ENCODE measurements at regions of chr10 and their contacts with region 1.

Region 1: GRCh38 chr10:121608469-121609190 is 10.4 kb upstream of the FGFR2 start:
- DNase-seq: peak; percentile 61 to 64
- H3K4me3 ChIP-seq: peak overlapping the region in 1 of 3 donors; percentile 2
- H3K27ac ChIP-seq: no peak overlapping the region
- H3K4me1 ChIP-seq: peaks cover 0 to 6% of the 10 kb centered on the region in 2 donors
- H3K27me3 ChIP-seq: no peaks in the 10 kb centered on the region
- CTCF ChIP-seq: peak; percentile 37 to 97 (median 92)
- POLR2A ChIP-seq: no peak

Region 2: DNA sequence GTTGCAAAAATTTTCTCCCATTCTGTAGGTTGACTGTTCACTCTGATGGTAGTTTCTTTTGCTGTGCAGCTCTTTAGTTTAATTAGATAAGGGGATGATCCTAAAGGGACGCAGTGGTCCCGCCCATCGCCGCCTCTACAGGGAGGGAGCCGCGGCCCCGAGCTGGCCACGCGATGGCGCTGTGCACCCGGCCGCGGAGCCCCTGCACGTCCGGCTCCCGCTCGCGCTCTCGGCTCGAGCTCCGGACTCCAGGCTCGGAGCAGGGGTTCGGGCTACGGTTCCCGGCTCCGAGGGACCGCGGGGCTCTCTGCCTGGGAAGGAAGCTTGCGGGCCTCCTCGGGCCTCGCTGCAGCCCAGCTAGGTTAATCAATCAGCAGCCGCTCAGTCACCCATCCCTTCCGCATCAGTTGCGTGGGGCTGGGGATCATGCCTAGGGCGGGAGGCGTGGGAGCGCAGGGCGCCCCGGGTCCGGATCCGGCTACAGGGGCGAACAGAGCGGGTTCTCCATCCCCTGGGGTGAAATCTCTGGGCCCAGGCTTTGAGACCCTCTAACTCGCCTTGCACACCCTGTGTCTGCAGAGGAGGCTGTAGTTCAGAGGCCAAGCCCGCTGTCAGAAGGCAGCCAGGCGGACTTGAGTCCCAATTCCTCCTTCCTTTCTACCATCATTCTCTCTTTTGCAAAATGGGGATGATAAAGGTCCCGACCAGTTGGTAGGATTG is 659.6 kb before region 1 on chr10:
- intact Hi-C with region 1: loop called (anchors 5 kb)
- DNase-seq: peak; percentile 69 to 76
- H3K4me3 ChIP-seq: peak overlapping the region in 2 of 3 donors; percentile 9 to 23
- H3K27ac ChIP-seq: no peak overlapping the region
- H3K4me1 ChIP-seq: peaks cover 10% of the 10 kb centered on the region in 2 donors
- H3K27me3 ChIP-seq: peaks cover 5% of the 10 kb centered on the region
- CTCF ChIP-seq: peak; percentile 69 to 98 (median 82)
- POLR2A ChIP-seq: no peak

Region 3: DNA sequence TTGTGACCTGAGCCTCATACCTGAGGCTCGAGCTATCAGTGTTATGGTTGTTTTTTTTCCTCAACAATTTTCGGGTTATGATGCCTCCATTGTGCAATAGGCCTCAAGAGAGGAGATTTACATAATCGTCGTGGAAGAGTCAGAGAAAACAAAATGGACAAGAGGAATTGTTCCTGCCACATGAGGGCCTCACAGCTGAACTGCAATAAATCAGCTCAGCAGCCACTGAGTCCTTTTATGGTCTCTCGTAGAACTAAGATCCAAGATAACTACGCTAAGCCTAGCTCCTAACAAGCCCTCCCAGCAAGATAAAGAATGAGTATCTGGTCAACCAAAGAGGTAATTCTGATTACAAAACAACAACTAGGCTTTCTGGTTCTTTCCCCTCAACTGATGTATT is 420.6 kb before region 1 on chr10:
- intact Hi-C with region 1: loop called (anchors 10 kb)
- DNase-seq: peak; percentile 21 to 36
- H3K4me3 ChIP-seq: no peak overlapping the region
- H3K27ac ChIP-seq: no peak overlapping the region
- H3K4me1 ChIP-seq: no peaks in the 10 kb centered on the region
- H3K27me3 ChIP-seq: no peaks in the 10 kb centered on the region
- CTCF ChIP-seq: peak in 4 of 6 experiments; percentile 33 to 64 (median 42)
- POLR2A ChIP-seq: no peak

Region 4: DNA sequence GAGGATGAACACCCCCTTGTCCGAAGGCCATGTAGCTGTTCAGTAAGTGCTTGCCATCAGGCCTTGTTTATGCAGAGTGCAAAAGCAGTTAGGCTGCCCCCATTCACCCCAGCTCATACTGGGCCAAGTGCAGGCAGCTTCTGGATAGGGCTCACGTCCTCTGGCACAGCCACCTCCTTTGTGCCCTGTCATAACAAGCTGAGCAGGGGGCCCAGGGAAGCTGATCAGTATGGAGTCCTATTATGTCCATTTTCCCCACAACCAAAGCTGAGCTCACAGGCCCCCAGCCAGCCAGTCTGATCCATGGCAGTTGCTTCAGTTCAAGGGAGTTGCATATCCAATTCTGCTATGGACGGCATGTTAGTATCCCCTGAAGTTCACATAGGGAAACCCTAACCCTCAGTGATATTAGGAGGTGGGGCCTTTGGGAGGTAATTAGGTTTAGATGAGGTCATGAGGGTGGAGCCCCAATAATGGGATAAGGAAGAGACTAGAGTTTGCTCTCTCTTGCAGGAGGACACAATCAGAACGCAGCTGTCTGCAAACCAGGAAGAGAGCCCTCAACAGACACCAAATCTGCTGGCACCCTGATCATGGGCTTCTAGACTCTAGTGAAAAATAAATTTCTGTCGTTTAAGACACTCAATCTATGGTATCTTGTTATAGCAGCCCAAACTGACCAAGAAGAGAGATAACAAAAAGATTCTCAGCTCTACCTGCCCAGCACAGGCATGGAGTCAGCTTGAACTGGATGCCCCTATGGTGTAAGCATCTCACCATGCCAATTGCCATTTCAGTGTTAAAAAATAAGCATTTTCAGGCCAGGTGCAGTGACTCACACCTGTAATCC is 166.3 kb before region 1 on chr10:
- intact Hi-C with region 1: no loop called
- DNase-seq: peak; percentile 22 to 23
- H3K4me3 ChIP-seq: no peak overlapping the region
- H3K27ac ChIP-seq: no peak overlapping the region
- H3K4me1 ChIP-seq: peaks cover 2 to 15% of the 10 kb centered on the region in 2 donors
- H3K27me3 ChIP-seq: no peaks in the 10 kb centered on the region
- CTCF ChIP-seq: no peak
- POLR2A ChIP-seq: no peak